Tibial artery (tissue), 4 donors: ENCODE measurements at regions of chr21 and their contacts with region 1.

Region 1: DNA sequence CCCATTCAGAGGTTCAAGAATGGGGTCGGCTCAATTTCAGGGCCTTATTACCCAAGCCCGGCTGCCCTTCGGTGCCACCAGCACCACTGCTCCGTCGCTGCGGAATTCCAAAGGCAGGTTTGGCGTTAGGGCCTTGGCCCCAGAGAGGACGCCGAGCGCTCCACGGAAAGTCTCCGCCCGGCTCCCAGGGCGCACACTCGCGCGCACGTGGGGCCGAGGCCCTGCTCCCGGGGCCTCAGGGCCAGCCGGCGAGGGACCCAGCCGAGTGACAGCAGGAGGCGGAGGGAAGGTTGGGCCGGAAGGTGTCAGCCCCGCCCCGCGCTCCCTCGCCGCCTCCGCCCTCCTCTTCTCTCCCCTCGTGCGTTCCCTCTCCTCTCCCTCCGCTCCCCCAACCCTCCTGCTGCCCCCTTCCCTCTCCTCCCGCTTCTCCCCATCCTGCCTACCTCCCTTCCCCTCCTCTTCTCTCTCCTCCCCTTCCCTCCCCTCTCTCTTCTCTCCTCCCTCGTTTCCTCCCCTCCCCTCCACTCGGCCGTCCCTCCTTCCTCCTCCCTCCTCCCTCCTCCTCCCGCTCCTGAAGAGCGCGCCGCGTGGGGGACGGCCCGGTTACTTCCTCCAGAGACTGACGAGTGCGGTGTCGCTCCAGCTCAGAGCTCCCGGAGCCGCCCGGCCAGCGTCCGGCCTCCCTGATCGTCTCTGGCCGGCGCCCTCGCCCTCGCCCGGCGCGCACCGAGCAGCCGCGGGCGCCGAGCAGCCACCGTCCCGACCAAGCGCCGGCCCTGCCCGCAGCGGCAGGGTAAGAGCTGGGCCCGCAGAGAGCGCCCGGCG is at the start of gene ETS2:
- DNase-seq: peak; percentile 90 to 96
- H3K4me3 ChIP-seq: peak within 1 kb of the TSS; percentile 75 to 86
- H3K27ac ChIP-seq: peak within 1 kb of the TSS; percentile 83 to 93
- H3K4me1 ChIP-seq: peaks cover 0 to 35% (median 15%) of the 10 kb centered on the region in 4 donors
- H3K27me3 ChIP-seq: no peaks in the 10 kb centered on the region
- CTCF ChIP-seq: no peak

Region 2: GRCh38 chr21:38733973-38734546 is 71.5 kb before region 1 on chr21:
- intact Hi-C with region 1: loop called (anchors 5 kb)
- DNase-seq: peak; percentile 93 to 94
- H3K4me3 ChIP-seq: peak overlapping the region; percentile 31 to 48
- H3K27ac ChIP-seq: peak overlapping the region; percentile 56 to 58
- H3K4me1 ChIP-seq: peaks cover 0 to 20% (median 4%) of the 10 kb centered on the region in 4 donors
- H3K27me3 ChIP-seq: no peaks in the 10 kb centered on the region
- CTCF ChIP-seq: peak; percentile 90 to 97

Region 3: DNA sequence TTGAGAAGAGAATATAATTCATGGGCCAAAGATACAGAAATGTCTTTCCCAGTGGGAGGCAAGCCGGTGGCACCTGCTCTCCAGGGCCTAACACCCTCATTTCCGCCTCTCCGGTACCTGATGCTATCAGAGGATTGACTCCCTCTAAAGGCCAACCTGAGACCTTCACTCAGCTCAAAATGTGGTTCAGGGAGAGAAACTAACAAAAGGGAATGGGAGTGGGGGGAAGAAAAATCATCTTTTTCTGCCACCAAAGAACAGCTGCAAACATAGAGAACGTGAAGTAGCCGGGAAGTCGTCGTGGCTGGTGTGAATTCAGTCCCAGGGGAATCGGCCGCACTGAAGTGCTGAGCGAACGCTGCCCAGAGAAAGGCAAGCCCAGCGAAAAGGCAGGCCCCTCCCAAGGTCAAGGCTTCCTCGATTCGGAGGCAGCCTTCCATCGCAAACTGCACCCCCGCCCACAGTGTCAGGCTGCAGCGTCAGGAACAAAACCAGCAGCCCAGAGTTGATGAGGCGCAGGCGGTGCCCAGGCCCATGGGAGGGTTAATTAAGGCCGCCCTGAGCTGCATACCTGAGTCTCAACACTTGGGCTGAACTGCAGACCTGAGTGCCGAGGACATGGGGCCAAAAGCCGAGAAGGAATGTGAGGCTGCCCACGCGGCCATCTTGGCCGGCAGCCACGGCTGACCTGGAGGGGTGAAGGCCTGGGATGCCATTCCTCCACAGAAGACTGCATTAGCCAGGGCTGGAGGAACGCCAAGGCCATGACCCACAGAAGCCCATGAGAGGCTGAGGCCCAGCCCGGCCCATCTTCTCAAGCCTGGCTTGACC is 217.5 kb after region 1 on chr21:
- intact Hi-C with region 1: loop called (anchors 10 kb)
- DNase-seq: peak in 1 of 2 donors; percentile 83
- H3K4me3 ChIP-seq: peak overlapping the region; percentile 5 to 23
- H3K27ac ChIP-seq: peak overlapping the region; percentile 74 to 77
- H3K4me1 ChIP-seq: peaks cover 0 to 36% (median 33%) of the 10 kb centered on the region in 4 donors
- H3K27me3 ChIP-seq: no peaks in the 10 kb centered on the region
- CTCF ChIP-seq: peak in 1 of 2 experiments; percentile 19

Region 4: DNA sequence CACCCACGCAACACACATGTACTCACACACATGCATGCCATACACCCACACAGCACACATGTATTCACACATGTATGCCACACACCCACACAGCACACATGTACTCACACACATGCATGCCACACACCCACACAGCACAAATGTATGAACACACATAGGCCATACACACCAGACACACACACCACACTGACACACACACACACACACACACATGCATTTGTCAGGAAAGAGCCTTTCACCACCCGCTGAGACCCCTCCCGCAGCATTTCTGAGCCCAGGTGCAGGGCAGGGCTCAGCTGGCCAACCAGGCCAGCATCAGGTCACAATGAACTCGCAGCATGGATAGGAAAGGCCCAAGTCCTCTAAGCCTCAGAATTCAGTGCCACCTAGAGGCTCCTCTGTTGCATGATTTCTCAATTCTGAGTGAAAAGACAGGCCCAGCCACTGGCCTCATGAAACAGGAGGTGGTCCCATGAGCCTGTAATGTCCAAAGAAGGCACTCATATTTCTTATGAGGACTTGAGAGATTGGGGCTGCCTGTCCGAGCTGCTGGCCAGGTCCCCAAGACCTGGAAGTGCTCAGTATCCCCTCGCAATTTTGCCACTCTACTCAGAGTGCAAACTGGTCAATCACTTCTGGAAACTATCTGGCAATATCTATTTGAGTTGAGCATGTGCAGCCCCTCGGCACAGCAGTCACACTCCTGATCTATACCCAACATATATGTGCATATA is 320.4 kb after region 1 on chr21:
- intact Hi-C with region 1: loop called (anchors 5 kb)
- DNase-seq: peak in 1 of 2 donors; percentile 51
- H3K4me3 ChIP-seq: no peak overlapping the region
- H3K27ac ChIP-seq: no peak overlapping the region
- H3K4me1 ChIP-seq: peaks cover 0 to 15% (median 5%) of the 10 kb centered on the region in 4 donors
- H3K27me3 ChIP-seq: no peaks in the 10 kb centered on the region
- CTCF ChIP-seq: peak; percentile 63 to 72